ENCODE measurements at regions of chr5 and their contacts with region 1.

Region 1: DNA sequence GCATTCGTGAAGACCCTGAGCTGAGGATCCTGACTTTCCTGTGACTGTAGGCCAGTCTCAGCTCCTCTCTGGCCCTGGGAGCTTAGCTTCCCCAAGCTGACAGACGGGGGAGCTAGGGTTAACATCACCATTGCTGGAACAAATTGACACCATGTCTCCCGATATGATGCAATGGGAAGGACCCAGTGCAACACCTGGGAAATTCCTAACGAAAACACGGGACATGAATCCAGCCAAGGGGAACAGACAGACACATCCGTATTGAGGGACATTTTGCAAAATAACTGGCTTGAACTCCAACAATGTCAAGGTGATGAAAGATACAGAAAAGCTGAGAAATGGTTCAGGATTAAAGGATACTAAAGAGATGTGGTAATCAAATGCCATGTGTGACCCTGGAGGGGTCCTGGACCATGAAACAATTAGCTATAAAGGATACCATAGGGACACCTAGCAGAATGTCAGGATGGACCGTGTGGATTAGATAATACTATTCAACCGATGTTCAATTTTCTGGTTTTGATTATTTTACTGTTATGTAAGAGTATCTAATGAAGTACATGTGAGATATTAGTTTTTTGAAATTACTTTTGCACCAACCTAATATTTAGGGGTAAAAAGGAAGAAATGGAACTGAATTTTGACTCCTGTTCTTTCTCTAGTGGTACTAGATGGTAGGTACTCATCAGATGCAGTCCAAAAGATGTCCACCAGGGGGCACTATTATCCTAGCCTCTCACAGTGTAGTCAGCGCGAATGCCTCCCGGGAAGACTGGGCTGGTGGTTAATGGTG is 52.7 kb downstream of the NDST1 start:
- DNase-seq: peak; percentile 70 to 92
- ATAC-seq: peak; percentile 93 to 99 (median 99)
- H3K4me3 ChIP-seq: no peak overlapping the region
- H3K4me3 Mint-ChIP-seq: no peak overlapping the region
- H3K27ac ChIP-seq: no peak overlapping the region
- H3K27ac Mint-ChIP-seq: no peak overlapping the region
- H3K4me1 ChIP-seq: no peaks in the 10 kb centered on the region
- H3K4me1 Mint-ChIP-seq: no peaks in the 10 kb centered on the region
- H3K27me3 ChIP-seq: no peaks in the 10 kb centered on the region
- H3K27me3 Mint-ChIP-seq: no peaks in the 10 kb centered on the region
- CTCF ChIP-seq: peak; percentile 95

Region 2: GRCh38 chr5:150458819-150459557 is 101.6 kb before region 1 on chr5:
- intact Hi-C with region 1: loop called (anchors 5 kb)
- DNase-seq: peak; percentile 83 to 90
- ATAC-seq: peak; percentile 95 to 99 (median 99)
- H3K4me3 ChIP-seq: no peak overlapping the region
- H3K4me3 Mint-ChIP-seq: no peak overlapping the region
- H3K27ac ChIP-seq: no peak overlapping the region
- H3K27ac Mint-ChIP-seq: peak overlapping the region in 1 of 2 donors; percentile 70
- H3K4me1 ChIP-seq: peaks cover 26% of the 10 kb centered on the region
- H3K4me1 Mint-ChIP-seq: peaks cover 4 to 17% of the 10 kb centered on the region in 2 donors
- H3K27me3 ChIP-seq: no peaks in the 10 kb centered on the region
- H3K27me3 Mint-ChIP-seq: no peaks in the 10 kb centered on the region
- CTCF ChIP-seq: peak; percentile 77

Region 3: DNA sequence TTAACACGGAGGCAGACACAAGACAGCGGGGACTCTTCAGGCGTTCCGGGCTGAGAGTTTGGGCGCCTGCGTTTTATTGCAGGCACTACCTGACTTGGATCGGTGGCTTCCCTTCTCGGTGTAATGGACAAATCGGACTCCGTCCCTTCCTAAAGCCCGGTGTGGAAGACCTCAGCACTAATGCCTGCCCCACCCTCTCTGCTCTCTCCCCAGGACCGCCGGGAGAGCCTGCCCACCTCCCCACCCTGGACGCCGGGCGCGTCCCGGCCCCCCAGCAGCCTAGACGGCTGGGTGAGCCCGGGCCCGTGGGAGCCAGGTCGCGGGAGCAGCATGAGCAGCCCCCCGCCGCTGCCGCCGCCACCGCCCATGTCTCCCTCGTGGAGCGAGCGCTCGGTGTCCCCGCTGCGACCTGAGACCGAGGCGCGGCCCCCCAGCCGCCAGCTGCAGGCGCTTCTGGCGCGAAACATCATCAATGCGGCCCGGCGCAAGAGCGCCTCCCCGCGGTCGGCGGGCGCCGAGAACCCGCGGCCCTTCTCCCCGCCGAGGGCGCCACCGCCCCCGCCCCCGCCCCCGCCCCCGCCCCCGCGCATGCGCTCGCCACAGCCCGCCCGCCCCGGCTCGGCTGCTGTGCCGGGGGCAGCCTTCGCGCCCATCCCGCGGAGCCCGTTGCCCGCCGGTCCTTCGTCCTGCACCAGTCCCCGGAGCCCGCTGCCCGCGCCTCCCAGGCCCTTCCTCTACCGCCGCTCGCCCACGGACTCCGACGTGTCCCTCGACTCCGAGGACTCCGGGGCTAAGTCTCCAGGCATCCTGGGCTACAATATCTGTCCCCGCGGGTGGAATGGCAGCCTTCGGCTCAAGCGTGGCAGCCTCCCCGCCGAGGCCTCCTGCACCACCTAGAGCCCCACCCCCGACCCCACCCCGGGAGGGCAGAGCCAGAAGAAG is 95.9 kb after region 1 on chr5:
- intact Hi-C with region 1: loop called (anchors 1 kb)
- DNase-seq: peak; percentile 83 to 92
- ATAC-seq: peak; percentile 93 to 97 (median 94)
- H3K4me3 ChIP-seq: peak overlapping the region; percentile 51
- H3K4me3 Mint-ChIP-seq: peak overlapping the region; percentile 83
- H3K27ac ChIP-seq: no peak overlapping the region
- H3K27ac Mint-ChIP-seq: peak overlapping the region in 1 of 2 donors; percentile 48
- H3K4me1 ChIP-seq: peaks cover 12% of the 10 kb centered on the region
- H3K4me1 Mint-ChIP-seq: peaks cover 0 to 15% of the 10 kb centered on the region in 2 donors
- H3K27me3 ChIP-seq: no peaks in the 10 kb centered on the region
- H3K27me3 Mint-ChIP-seq: peaks cover 0 to 3% of the 10 kb centered on the region in 2 donors
- CTCF ChIP-seq: peak; percentile 74

Region 4: DNA sequence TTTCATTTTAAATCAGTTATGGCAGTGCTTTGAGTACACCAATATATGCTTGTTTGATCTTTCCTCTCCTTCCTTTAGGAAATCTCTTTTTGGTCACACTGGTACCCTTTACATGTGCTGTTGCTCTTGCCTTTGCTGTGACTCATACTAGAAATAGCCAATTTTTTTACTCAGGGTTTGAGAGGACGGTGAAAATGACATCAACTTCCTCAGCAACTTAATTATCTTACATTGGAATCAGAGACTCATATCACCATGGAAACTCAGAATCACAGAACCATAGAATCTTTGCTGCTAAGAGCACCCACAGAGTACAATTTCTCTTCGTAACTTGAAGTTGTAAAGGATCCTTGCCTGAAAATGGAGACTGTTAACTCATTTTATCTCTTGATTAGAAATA is 358.0 kb after region 1 on chr5:
- intact Hi-C with region 1: no loop called
- DNase-seq: no peak
- ATAC-seq: no peak
- H3K4me3 ChIP-seq: no peak overlapping the region
- H3K4me3 Mint-ChIP-seq: no peak overlapping the region
- H3K27ac ChIP-seq: no peak overlapping the region
- H3K27ac Mint-ChIP-seq: no peak overlapping the region
- H3K4me1 ChIP-seq: no peaks in the 10 kb centered on the region
- H3K4me1 Mint-ChIP-seq: no peaks in the 10 kb centered on the region
- H3K27me3 ChIP-seq: no peaks in the 10 kb centered on the region
- H3K27me3 Mint-ChIP-seq: peaks cover 0 to 8% of the 10 kb centered on the region in 2 donors
- CTCF ChIP-seq: no peak